Mammary epithelial cell (primary cell): ENCODE measurements at regions of chr6 and their contacts with region 1.

Region 1: GRCh38 chr6:46419576-46420002 is 71.7 kb downstream of the RCAN2 start:
- DNase-seq: peak; percentile 48
- H3K4me3 ChIP-seq: no peak overlapping the region
- H3K27ac ChIP-seq: no peak overlapping the region
- H3K4me1 ChIP-seq: no peaks in the 10 kb centered on the region
- H3K27me3 ChIP-seq: peaks cover 5% of the 10 kb centered on the region
- CTCF ChIP-seq: peak; percentile 81 to 82

Region 2: GRCh38 chr6:46491628-46492547 is 72.3 kb after region 1 on chr6:
- CTCF ChIA-PET with region 1: interaction called, 6 read pairs
- dilution Hi-C with region 1: no loop called
- in situ Hi-C with region 1: no loop called
- intact Hi-C with region 1: loop called (anchors 1 kb)
- DNase-seq: peak; percentile 33
- H3K4me3 ChIP-seq: peak overlapping the region; percentile 37 to 61 (median 43)
- H3K27ac ChIP-seq: no peak overlapping the region
- H3K4me1 ChIP-seq: peaks cover 17% of the 10 kb centered on the region
- H3K27me3 ChIP-seq: peaks cover 26% of the 10 kb centered on the region
- CTCF ChIP-seq: peak; percentile 1 to 44

Region 3: DNA sequence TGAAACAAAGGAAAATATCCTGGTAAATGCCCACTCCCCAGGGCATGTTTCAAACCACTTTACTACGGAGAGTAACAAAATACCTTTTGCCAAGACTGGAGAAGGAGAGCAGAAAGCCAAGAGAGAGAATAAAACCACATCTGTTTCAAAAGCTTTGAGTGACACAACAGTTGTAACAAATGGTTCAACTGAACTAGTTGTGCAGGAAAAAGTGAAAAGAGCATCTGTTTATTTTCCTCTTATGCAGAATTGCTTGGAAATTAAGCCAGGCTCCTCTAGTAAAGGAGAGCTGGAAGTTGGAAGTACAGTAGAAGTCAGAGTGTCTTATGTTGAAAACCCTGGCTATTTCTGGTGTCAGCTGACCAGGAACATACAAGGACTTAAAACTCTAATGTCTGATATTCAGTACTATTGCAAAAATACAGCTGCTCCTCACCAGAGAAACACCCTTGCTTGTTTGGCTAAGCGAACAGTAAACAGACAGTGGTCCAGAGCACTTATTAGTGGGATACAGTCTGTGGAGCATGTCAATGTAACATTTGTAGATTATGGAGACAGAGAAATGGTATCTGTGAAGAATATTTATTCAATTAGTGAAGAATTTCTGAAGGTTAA is 270.7 kb after region 1 on chr6:
- CTCF ChIA-PET with region 1: no interaction called
- dilution Hi-C with region 1: no loop called
- in situ Hi-C with region 1: no loop called
- intact Hi-C with region 1: loop called (anchors 5 kb)
- DNase-seq: no peak
- H3K4me3 ChIP-seq: no peak overlapping the region
- H3K27ac ChIP-seq: no peak overlapping the region
- H3K4me1 ChIP-seq: no peaks in the 10 kb centered on the region
- H3K27me3 ChIP-seq: no peaks in the 10 kb centered on the region
- CTCF ChIP-seq: no peak

Region 4: GRCh38 chr6:46848684-46849360 is 429.2 kb after region 1 on chr6:
- CTCF ChIA-PET with region 1: no interaction called
- dilution Hi-C with region 1: no loop called
- in situ Hi-C with region 1: no loop called
- intact Hi-C with region 1: loop called (anchors 1 kb)
- DNase-seq: peak; percentile 73
- H3K4me3 ChIP-seq: no peak overlapping the region
- H3K27ac ChIP-seq: no peak overlapping the region
- H3K4me1 ChIP-seq: peaks cover 15% of the 10 kb centered on the region
- H3K27me3 ChIP-seq: no peaks in the 10 kb centered on the region
- CTCF ChIP-seq: peak; percentile 69 to 96

Region 5: GRCh38 chr6:47047479-47048407 is 628.2 kb after region 1 on chr6:
- CTCF ChIA-PET with region 1: no interaction called
- dilution Hi-C with region 1: no loop called
- in situ Hi-C with region 1: no loop called
- intact Hi-C with region 1: loop called (anchors 5 kb)
- DNase-seq: peak; percentile 75
- H3K4me3 ChIP-seq: no peak overlapping the region
- H3K27ac ChIP-seq: peak overlapping the region; percentile 37
- H3K4me1 ChIP-seq: peaks cover 44% of the 10 kb centered on the region
- H3K27me3 ChIP-seq: no peaks in the 10 kb centered on the region
- CTCF ChIP-seq: peak; percentile 83 to 86